Mammary epithelial cell (primary cell): ENCODE measurements at regions of chr15 and their contacts with region 1.

Region 1: DNA sequence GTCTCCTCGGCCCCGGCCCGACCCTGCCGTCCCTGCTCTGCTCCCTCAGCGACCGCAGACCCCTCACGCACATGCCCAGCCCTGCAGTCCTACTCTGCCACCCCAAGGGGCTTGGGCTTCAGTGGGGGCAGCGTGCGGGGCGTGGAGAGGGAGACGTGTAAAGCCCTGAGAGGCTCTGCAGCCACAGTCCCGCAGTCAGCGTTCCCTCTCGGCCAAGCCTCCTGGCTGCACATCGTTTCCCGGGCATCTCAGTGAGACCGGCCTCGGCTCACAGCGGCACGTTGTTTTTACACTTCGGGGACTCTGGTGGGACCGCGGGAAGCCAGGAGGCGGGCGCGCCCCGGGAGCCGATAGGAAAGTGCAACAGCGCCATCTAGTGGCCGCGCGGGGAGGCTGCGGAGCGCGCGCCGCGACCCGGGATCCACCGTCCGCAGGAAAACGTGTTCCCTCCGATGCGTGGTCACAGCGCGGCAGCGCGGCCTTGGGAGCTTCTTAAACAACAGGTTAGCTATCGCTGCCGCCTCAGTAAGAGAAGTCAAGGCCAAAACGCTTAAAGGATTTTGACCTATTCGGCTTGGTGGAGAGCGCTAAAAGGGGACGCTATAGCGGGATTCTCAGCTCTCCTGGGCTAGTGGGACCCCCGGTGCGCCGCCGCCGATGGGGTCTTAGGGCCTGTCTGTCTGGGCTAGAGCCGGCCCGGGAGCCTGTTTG is 226.8 kb upstream of the IGF1R start:
- DNase-seq: peak; percentile 24
- H3K4me3 ChIP-seq: peak overlapping the region in 1 of 3 experiments; percentile 40
- H3K27ac ChIP-seq: no peak overlapping the region
- H3K4me1 ChIP-seq: peaks cover 8% of the 10 kb centered on the region
- H3K27me3 ChIP-seq: peaks cover 4% of the 10 kb centered on the region
- CTCF ChIP-seq: peak; percentile 69 to 98

Region 2: GRCh38 chr15:97875513-97876280 is 545.9 kb before region 1 on chr15:
- CTCF ChIA-PET with region 1: no interaction called
- dilution Hi-C with region 1: no loop called
- in situ Hi-C with region 1: loop called (anchors 25 kb)
- intact Hi-C with region 1: no loop called
- DNase-seq: no peak
- H3K4me3 ChIP-seq: no peak overlapping the region
- H3K27ac ChIP-seq: no peak overlapping the region
- H3K4me1 ChIP-seq: no peaks in the 10 kb centered on the region
- H3K27me3 ChIP-seq: no peaks in the 10 kb centered on the region
- CTCF ChIP-seq: no peak

Region 3: DNA sequence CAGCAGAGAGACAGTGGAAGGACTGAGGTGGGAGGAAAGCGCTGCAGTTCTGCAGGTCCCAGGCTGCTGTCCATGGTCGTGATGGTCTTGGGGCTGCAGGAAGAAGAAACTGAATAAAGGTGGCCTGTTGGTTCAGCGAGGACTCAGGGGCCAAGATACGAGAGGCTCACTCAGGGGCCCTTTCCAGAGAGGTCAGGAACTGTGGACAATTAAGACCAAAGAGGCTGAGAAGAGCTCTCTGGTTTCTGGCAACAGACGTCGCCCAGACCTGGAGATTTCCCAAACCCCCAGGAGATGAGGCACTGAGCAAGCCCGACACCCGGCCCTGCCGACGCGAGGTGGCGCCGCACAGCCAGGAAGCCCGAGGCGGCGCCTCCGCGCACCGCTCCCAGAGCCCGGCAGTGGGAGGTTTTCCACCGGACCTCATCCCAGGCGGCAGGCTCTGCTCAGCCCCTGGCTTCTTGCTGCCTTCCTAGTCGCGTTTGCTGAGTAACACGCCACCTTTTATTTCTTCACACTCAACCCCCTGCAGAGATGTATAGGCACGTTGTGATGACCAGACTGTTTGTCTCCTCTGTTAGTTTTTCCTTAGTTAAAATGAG is 517.5 kb before region 1 on chr15:
- CTCF ChIA-PET with region 1: no interaction called
- dilution Hi-C with region 1: no loop called
- in situ Hi-C with region 1: loop called (anchors 25 kb)
- intact Hi-C with region 1: loop called (anchors 5 kb)
- DNase-seq: peak; percentile 67
- H3K4me3 ChIP-seq: no peak overlapping the region
- H3K27ac ChIP-seq: no peak overlapping the region
- H3K4me1 ChIP-seq: peaks cover 20% of the 10 kb centered on the region
- H3K27me3 ChIP-seq: no peaks in the 10 kb centered on the region
- CTCF ChIP-seq: peak; percentile 85 to 93

Region 4: DNA sequence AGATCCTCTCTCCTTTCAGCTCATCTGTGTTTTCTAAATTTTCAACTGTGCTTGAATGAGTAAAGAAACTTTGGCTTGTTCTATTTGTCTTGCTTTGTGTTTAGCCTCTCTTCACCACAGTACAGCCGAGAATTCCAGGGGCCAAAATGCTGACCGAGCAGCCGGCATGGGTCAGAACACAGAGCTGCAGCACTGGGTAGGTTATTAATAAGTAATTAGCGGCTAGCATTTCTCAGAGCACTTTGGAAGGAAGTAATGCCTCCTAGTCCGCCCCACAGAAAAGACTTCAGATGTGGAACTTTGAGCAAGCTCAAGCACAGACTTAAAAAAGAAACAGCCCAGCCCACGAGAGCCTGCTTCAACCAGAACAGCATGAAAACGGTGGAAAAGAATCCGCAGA is 117.2 kb before region 1 on chr15:
- CTCF ChIA-PET with region 1: interaction called, 3 read pairs
- dilution Hi-C with region 1: no loop called
- in situ Hi-C with region 1: loop called in 1 of 2 experiments (anchors 5 kb)
- intact Hi-C with region 1: no loop called
- DNase-seq: no peak
- H3K4me3 ChIP-seq: no peak overlapping the region
- H3K27ac ChIP-seq: no peak overlapping the region
- H3K4me1 ChIP-seq: no peaks in the 10 kb centered on the region
- H3K27me3 ChIP-seq: no peaks in the 10 kb centered on the region
- CTCF ChIP-seq: no peak

Region 5: GRCh38 chr15:98311566-98312188 is 109.9 kb before region 1 on chr15:
- CTCF ChIA-PET with region 1: interaction called, 8 read pairs
- dilution Hi-C with region 1: loop called (anchors 10 kb)
- in situ Hi-C with region 1: no loop called
- intact Hi-C with region 1: loop called (anchors 1 kb)
- DNase-seq: peak; percentile 62
- H3K4me3 ChIP-seq: no peak overlapping the region
- H3K27ac ChIP-seq: no peak overlapping the region
- H3K4me1 ChIP-seq: no peaks in the 10 kb centered on the region
- H3K27me3 ChIP-seq: no peaks in the 10 kb centered on the region
- CTCF ChIP-seq: peak; percentile 77 to 84

Region 6: DNA sequence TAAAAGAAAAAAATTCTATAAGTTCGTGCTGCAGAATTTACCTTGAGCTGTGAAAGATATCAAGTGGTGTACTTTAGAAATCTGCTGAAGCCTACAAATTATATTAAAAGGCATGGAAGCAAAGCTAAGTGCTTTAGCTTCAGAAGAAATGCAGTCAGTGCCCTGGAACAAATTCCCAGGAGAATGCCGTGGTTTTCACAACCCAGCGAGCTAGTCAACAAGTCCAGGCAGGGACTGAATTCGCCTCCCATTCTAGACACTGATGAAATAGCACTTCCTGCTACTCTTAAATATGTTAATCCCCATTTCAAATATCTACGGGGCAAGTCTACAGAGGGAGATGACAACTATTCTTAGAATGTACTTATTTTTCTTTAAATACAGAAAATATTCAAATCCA is 99.7 kb before region 1 on chr15:
- CTCF ChIA-PET with region 1: no interaction called
- dilution Hi-C with region 1: loop called (anchors 10 kb)
- in situ Hi-C with region 1: loop called in 1 of 2 experiments (anchors 5 kb)
- intact Hi-C with region 1: no loop called
- DNase-seq: peak; percentile 80
- H3K4me3 ChIP-seq: no peak overlapping the region
- H3K27ac ChIP-seq: peak overlapping the region; percentile 61
- H3K4me1 ChIP-seq: peaks cover 18% of the 10 kb centered on the region
- H3K27me3 ChIP-seq: no peaks in the 10 kb centered on the region
- CTCF ChIP-seq: no peak